Heart right ventricle (tissue), 16 donors: ENCODE measurements at regions of chr12 and their contacts with region 1.

Region 1: DNA sequence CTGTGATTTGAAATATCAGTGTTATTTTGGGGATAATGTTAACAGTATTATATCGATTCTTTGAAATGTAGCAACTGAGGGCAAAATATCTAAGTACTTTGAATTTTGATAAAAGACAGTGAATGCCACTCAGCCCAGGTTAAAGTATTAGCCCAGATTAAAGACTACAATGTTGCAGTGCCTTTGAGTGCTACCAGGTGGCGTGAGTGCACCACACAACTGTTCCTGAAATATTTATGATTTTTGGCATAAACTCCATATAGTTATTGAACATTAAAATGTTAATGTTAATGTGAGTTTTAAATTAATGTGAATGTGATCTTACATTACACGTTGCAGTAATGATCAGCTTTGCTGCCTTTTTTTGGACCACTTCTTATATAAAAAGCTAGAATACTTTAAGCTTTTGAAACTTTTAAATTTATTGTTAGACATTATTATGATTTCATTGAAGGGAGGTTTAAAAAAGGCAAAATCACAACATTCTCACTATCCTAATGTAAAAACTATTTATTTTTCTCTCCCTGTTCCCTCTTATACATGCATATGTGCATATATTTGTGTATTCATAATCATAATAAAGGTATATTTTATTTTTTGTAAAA is 22.5 kb downstream of the MRPS35 start:
- DNase-seq: no peak
- ATAC-seq: peak in 1 of 8 donors; percentile 38
- H3K4me3 ChIP-seq: no peak overlapping the region
- H3K27ac ChIP-seq: no peak overlapping the region
- H3K4me1 ChIP-seq: no peaks in the 10 kb centered on the region
- H3K27me3 ChIP-seq: no peaks in the 10 kb centered on the region
- CTCF ChIP-seq: peak; percentile 53 to 90 (median 76)

Region 2: DNA sequence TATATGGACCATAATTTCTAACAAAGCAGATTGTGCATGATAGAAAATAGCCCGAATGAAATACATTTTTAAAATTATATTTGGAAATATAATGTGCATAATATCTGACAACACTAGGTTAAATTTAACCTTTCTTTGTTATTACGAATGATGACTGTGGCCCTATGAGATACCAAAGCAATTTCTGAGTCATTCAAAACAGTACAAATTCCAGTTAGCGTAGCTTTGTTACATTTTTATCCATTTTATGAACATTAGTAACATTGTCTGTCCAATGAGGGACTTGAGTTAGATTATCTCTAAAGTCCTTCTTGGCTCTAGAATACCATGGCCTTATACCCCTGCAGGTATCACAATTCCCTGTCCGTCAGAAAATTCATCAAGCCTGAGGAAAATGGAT is 75.9 kb before region 1 on chr12:
- intact Hi-C with region 1: no loop called
- DNase-seq: no peak
- ATAC-seq: no peak
- H3K4me3 ChIP-seq: no peak overlapping the region
- H3K27ac ChIP-seq: no peak overlapping the region
- H3K4me1 ChIP-seq: peaks cover 0 to 11% (median 0%) of the 10 kb centered on the region in 9 donors
- H3K27me3 ChIP-seq: no peaks in the 10 kb centered on the region
- CTCF ChIP-seq: no peak

Region 3: DNA sequence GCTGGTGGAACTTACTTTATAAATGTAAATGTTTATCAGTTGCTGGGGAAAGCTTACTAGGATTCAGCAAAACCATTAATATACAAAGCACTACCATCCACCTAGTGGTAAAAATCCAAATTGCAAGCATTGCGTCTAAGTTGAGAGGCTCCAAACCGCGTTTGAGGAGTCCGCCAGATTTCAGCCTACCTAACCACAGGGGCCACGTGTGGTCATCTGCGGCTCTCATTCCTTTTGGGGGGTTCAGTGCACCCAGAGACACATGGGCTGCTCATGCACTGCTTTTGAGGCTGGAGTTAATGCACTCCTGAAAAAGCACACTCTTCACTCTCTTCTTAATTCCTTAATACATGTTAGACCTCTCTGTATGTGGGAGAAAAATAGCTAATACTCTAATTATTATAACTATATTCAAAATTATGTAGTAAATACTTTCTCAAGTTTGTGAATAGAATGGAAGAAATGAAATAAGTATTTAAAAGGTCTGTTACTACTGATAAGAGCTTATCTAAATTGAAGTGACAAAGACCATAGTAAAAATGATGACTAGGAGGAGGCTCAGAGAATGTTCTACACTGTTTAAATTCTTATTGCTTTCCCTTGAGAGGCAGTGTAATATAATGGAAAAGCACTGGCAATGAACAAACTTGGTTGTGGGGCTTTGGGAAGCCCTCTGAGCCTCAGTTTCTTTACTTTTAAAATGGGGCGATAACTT is 88.3 kb after region 1 on chr12:
- intact Hi-C with region 1: loop called in 7 of 10 experiments (anchors 2 to 5 kb)
- DNase-seq: peak in 1 of 2 donors; percentile 50
- ATAC-seq: peak in 7 of 8 donors; percentile 45 to 79 (median 54)
- H3K4me3 ChIP-seq: no peak overlapping the region
- H3K27ac ChIP-seq: no peak overlapping the region
- H3K4me1 ChIP-seq: peaks cover 0 to 14% (median 0%) of the 10 kb centered on the region in 9 donors
- H3K27me3 ChIP-seq: peaks cover 0 to 7% (median 0%) of the 10 kb centered on the region in 7 donors
- CTCF ChIP-seq: peak; percentile 57 to 84 (median 77)

Region 4: DNA sequence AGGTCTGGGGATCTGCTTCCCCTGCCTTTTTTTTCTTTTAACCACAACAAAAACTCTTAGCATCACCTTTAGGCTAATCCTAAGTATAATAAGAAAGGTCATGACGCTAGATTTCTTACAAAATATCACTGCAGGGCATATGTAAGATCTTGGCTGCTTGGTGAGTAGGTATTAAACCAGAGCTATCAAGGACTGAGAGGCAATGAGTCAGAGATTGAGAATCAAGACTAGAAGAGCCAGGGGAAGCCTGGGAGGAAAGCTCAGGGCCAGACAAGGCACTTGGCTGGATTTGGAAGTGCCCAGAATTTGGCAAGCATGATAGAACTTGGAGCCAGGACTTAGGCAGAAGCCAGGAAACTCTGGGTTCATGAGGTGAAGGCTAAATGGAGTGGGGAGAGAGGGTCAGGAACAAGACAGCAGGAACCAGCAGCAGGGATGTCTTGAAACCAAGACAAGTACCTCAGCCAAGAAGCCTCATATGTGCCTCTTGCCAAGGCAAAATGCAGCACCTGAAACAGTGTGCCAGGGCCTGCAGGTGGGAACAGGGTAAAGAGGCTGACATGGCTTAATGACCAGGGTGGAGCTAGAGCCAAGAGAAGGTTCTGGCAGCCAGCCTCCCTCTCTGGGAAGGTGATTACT is 189.5 kb after region 1 on chr12:
- intact Hi-C with region 1: loop called in 1 of 10 experiments (anchors 5 kb)
- DNase-seq: peak in 1 of 2 donors; percentile 21
- ATAC-seq: peak; percentile 42 to 92 (median 76)
- H3K4me3 ChIP-seq: no peak overlapping the region
- H3K27ac ChIP-seq: peak overlapping the region in 1 of 10 donors; percentile 7
- H3K4me1 ChIP-seq: peaks cover 0 to 12% (median 5%) of the 10 kb centered on the region in 9 donors
- H3K27me3 ChIP-seq: no peaks in the 10 kb centered on the region
- CTCF ChIP-seq: no peak

Region 5: DNA sequence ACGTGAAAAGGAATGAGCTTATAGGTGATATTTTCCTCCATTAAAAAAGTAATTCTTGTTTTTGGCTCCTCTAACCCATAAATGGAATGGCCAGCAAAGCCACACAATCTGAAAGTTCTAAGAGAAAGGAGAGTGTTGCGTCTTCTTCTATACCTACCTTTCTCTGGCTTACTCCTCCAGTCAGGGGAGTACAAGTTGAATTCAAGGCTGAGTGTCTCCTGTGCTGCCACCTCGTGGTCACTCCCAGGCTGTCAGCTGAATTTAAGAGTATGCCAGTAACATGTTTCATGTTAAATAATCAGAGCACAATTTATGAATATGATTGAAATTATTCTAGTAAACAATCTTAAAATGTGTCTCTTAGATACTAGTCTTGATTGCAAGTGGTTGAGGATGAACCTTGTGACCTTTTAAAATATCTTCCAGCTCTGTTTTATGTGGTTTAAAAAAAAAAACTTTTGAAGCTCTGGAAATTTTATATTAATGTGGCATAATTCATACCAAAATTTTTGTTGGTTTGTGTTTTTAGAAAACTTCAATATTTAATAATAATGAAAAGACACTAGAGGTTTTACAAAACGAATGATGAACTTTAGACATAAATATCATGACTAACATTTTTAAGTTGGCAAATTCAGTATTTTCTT is 207.7 kb after region 1 on chr12:
- intact Hi-C with region 1: loop called (anchors 2 to 10 kb)
- DNase-seq: peak; percentile 61 to 63
- ATAC-seq: peak in 6 of 8 donors; percentile 34 to 85 (median 68)
- H3K4me3 ChIP-seq: no peak overlapping the region
- H3K27ac ChIP-seq: no peak overlapping the region
- H3K4me1 ChIP-seq: no peaks in the 10 kb centered on the region
- H3K27me3 ChIP-seq: no peaks in the 10 kb centered on the region
- CTCF ChIP-seq: peak; percentile 37 to 85 (median 83)

Region 6: GRCh38 chr12:28172434-28173030 is 439.4 kb after region 1 on chr12:
- intact Hi-C with region 1: loop called in 1 of 10 experiments (anchors 10 kb)
- DNase-seq: no peak
- ATAC-seq: no peak
- H3K4me3 ChIP-seq: no peak overlapping the region
- H3K27ac ChIP-seq: no peak overlapping the region
- H3K4me1 ChIP-seq: no peaks in the 10 kb centered on the region
- H3K27me3 ChIP-seq: no peaks in the 10 kb centered on the region
- CTCF ChIP-seq: peak in 8 of 9 donors; percentile 13 to 59 (median 46)

Region 7: DNA sequence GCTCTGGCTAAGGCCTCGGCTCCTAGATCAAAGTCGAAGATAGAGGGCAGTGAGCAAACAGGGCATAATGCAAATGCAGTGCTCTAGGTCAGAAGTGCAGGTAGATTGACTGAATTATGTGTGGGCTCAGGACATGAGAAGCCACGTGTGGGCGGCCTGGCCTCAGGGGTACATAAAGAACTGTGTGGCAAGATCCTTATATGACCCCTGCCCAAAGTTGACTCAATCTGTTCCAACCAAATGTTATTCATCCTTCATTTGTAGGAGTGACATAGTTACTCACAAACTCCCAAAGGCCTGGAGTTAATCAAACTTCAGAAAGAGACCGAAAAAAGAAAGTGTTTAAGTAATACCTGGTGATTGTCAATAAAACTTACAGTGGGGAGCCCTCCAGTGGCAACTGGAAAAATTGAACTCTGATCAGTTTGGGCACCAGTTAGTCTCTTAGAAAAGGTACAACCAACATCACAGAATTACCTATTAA is 1265.5 kb after region 1 on chr12:
- intact Hi-C with region 1: loop called in 1 of 10 experiments (anchors 10 kb)
- DNase-seq: no peak
- ATAC-seq: peak in 3 of 8 donors; percentile 33 to 55 (median 37)
- H3K4me3 ChIP-seq: no peak overlapping the region
- H3K27ac ChIP-seq: no peak overlapping the region
- H3K4me1 ChIP-seq: peaks cover 0 to 19% (median 0%) of the 10 kb centered on the region in 9 donors
- H3K27me3 ChIP-seq: no peaks in the 10 kb centered on the region
- CTCF ChIP-seq: peak in 7 of 9 donors; percentile 38 to 72 (median 55)